ENCODE measurements at regions of chr22 and their contacts with region 1.

Region 1: DNA sequence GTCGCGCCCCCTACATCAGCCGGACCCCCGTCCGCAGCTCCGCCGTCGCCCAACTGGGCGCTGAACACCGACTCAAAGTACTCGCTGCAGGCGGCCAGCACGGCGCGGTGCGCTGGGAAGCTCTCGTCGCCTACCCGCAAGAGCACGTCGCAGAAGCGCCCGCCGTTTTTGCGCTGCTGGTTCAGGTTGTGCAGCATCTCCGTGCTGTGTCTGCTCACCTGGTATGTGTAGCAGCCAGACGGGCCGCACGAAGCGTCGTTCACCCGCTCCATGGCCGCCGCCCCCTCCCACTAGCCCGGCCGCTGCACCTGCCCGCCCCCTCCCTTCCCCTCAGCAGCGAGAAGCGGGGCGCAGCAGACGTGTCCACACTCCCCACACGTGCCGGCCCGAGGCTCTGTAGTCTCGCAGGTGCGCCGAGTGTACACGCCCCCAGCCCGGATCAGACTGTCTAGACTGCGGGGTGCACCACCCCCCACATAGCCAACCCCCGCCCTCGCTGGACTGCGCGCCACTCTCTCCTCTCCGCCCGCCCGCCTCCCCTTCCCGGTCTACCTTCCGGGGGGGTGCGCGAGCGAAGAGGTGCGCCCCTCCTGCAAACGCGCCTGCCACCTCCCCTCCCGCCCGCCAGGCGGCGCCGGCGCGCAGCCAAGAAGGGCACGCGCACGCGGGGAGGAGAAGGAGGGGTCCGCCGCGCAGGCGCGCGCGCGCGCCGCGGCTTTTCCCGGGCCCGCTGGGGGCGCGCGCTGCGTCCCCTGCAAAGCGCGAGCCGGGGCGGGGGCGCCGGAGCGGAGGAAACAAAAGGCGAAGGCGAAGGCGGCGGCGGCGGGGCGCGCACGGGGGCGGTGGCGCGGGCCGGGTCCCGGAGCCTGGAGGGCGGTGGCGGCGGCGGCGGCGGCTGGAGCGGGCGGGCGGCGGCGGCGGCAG is 553 bp downstream of the PATZ1 start:
- DNase-seq: peak; percentile 78 to 97 (median 90)
- ATAC-seq: peak; percentile 77
- H3K4me3 ChIP-seq: peak overlapping the region; percentile 63 to 72
- H3K4me3 Mint-ChIP-seq: peak overlapping the region; percentile 90
- H3K27ac ChIP-seq: peak overlapping the region; percentile 51 to 70
- H3K27ac Mint-ChIP-seq: peak overlapping the region; percentile 93
- H3K4me1 ChIP-seq: peaks cover 52% of the 10 kb centered on the region
- H3K4me1 Mint-ChIP-seq: peaks cover 52% of the 10 kb centered on the region
- H3K27me3 ChIP-seq: no peaks in the 10 kb centered on the region
- H3K27me3 Mint-ChIP-seq: no peaks in the 10 kb centered on the region
- CTCF ChIP-seq: peak; percentile 82

Region 2: DNA sequence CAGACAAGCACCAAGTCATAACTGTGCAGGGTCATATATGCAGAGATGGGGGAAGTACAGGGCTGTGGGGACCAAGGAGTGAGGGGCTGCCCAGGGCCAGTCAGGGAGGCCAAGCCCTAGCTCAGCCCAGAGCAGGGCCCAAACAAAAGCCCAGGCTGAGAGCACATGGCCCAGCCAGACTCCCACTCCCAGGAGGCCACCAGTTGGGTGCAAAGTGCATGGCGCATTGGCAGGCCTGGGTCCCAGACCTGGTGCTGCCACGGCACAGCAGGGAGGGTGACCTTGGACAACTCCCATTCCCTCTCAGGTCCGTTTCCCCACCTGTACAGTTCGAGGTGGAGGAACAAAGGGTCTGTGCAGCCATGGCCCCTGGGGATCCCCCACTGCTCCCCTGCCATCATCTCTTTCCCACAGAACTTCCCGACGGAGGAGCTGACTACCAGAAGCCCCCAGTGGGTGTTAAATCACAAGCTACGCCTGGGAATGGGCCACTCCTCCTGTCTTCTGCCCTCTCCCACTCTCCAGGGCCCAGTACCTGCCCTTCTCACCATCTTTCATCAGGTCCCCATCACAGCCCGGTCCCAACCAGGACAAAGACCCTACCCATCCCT is 1765.3 kb before region 1 on chr22:
- CTCF ChIA-PET with region 1: no interaction called
- POLR2A ChIA-PET with region 1: no interaction called
- intact Hi-C with region 1: loop called in 1 of 2 experiments (anchors 5 kb)
- DNase-seq: peak in 3 of 9 experiments; percentile 17 to 49 (median 36)
- ATAC-seq: peak; percentile 16
- H3K4me3 ChIP-seq: peak overlapping the region; percentile 69 to 80
- H3K4me3 Mint-ChIP-seq: peak overlapping the region; percentile 93
- H3K27ac ChIP-seq: peak overlapping the region; percentile 59 to 61
- H3K27ac Mint-ChIP-seq: peak overlapping the region; percentile 90
- H3K4me1 ChIP-seq: peaks cover 15% of the 10 kb centered on the region
- H3K4me1 Mint-ChIP-seq: peaks cover 21% of the 10 kb centered on the region
- H3K27me3 ChIP-seq: no peaks in the 10 kb centered on the region
- H3K27me3 Mint-ChIP-seq: no peaks in the 10 kb centered on the region
- CTCF ChIP-seq: no peak

Region 3: DNA sequence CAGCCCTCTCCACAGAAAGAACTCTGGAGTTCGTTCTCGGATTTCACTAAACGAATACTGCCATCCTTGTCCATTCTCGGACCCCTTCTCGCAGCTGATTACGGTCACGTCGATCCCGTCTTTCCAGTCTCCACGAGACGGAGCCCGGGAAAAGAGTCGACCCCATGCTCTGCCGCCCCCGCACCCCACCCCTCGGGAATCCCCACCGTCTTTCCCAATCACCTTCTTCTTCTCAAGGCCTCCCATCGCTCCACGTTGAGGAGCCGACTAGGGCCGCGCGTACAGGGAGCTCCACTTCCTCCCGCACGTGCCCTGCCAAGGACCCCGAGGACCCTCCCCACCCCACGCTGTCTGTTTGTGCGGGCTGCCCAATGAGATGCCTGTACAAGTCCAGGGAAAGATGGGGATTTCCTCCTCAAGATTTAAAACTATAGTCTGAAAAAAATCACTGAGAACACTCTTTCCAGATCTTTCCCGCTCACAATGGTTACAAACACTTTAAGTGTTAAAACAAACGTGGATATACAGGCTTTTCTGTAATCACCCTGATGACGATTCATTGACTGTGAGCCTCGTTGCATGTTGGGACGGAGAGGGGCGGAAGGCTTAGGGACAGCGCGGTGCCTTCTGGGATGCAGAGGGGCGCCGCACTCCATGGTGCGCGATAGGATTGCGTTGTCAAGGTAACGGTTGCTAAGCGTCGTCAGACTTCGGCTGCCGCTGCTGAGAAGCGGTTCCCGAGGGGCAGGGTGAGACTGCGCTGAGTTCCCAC is 753.8 kb before region 1 on chr22 and contains the start of gene PES1:
- CTCF ChIA-PET with region 1: no interaction called
- POLR2A ChIA-PET with region 1: no interaction called
- intact Hi-C with region 1: loop called (anchors 2 to 5 kb)
- DNase-seq: peak; percentile 90 to 99 (median 95)
- ATAC-seq: peak; percentile 96
- H3K4me3 ChIP-seq: peak within 1 kb of the TSS; percentile 79 to 80
- H3K4me3 Mint-ChIP-seq: no peak within 1 kb of the TSS
- H3K27ac ChIP-seq: peak within 1 kb of the TSS; percentile 89 to 97
- H3K27ac Mint-ChIP-seq: no peak within 1 kb of the TSS
- H3K4me1 ChIP-seq: peaks cover 15% of the 10 kb centered on the region
- H3K4me1 Mint-ChIP-seq: no peaks in the 10 kb centered on the region
- H3K27me3 ChIP-seq: no peaks in the 10 kb centered on the region
- H3K27me3 Mint-ChIP-seq: peaks cover 13% of the 10 kb centered on the region
- CTCF ChIP-seq: no peak
- total RNA-seq, gene PES1: 39.7 to 47.0 TPM

Region 4: DNA sequence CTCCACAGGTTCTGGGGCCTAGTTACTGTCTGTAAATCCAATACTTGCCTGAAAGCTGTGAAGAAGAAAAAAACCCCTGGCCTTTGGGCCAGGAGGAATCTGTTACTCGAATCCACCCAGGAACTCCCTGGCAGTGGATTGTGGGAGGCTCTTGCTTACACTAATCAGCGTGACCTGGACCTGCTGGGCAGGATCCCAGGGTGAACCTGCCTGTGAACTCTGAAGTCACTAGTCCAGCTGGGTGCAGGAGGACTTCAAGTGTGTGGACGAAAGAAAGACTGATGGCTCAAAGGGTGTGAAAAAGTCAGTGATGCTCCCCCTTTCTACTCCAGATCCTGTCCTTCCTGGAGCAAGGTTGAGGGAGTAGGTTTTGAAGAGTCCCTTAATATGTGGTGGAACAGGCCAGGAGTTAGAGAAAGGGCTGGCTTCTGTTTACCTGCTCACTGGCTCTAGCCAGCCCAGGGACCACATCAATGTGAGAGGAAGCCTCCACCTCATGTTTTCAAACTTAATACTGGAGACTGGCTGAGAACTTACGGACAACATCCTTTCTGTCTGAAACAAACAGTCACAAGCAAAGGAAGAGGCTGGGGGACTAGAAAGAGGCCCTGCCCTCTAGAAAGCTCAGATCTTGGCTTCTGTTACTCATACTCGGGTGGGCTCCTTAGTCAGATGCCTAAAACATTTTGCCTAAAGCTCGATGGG is 66.8 kb before region 1 on chr22:
- CTCF ChIA-PET with region 1: interaction called, 3 read pairs
- POLR2A ChIA-PET with region 1: interaction called, 16 read pairs
- intact Hi-C with region 1: no loop called
- DNase-seq: peak in 8 of 9 experiments; percentile 30 to 78 (median 64)
- ATAC-seq: peak; percentile 73
- H3K4me3 ChIP-seq: no peak overlapping the region
- H3K4me3 Mint-ChIP-seq: peak overlapping the region; percentile 73
- H3K27ac ChIP-seq: peak overlapping the region; percentile 54 to 76
- H3K27ac Mint-ChIP-seq: peak overlapping the region; percentile 94
- H3K4me1 ChIP-seq: peaks cover 93% of the 10 kb centered on the region
- H3K4me1 Mint-ChIP-seq: peaks cover 89% of the 10 kb centered on the region
- H3K27me3 ChIP-seq: no peaks in the 10 kb centered on the region
- H3K27me3 Mint-ChIP-seq: no peaks in the 10 kb centered on the region
- CTCF ChIP-seq: no peak

Region 5: DNA sequence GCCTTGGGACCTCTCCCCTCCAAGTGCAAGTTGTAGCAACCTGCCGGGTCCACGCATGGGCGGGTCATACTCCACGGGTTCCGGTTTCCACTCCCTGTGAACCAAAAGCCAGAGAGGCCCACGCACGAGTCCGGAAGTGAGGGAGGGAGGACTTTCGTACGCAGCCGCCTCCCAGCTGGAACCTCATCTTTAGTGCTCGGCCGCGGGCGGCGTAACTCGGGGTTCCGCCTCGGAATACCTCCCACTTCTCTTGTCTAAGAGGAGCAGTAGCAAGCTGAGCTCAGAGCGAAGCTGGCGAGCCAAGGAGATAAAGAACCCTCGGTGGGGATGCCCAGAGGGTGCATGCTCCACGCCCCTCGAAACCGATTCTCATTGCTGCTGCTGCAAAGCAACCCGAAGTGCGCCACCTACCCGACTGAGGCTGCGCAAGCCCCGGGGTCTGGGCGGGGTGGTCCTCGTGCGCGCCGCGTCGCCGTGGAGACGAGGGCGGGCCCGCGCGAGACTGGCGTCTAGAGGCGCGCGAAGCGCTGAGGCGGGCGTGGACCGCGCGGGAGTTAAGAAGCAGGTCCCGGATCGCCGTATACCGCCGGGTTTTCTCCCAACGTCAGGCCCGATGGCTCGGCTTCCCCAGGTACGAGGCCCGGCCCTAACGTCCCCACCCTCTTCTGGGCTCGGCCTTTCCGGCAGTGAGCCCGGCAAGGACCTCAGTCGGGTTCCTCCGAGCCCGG is 150.6 kb after region 1 on chr22 and contains the start of gene SFI1:
- CTCF ChIA-PET with region 1: no interaction called
- POLR2A ChIA-PET with region 1: interaction called, 6 read pairs
- intact Hi-C with region 1: loop called in 1 of 2 experiments (anchors 2 kb)
- DNase-seq: peak; percentile 93 to 98 (median 96)
- ATAC-seq: peak; percentile 83
- H3K4me3 ChIP-seq: peak within 1 kb of the TSS; percentile 83 to 91
- H3K4me3 Mint-ChIP-seq: peak within 1 kb of the TSS; percentile 95
- H3K27ac ChIP-seq: peak within 1 kb of the TSS; percentile 87 to 90
- H3K27ac Mint-ChIP-seq: peak within 1 kb of the TSS; percentile 99
- H3K4me1 ChIP-seq: peaks cover 27% of the 10 kb centered on the region
- H3K4me1 Mint-ChIP-seq: peaks cover 45% of the 10 kb centered on the region
- H3K27me3 ChIP-seq: no peaks in the 10 kb centered on the region
- H3K27me3 Mint-ChIP-seq: no peaks in the 10 kb centered on the region
- CTCF ChIP-seq: no peak
- total RNA-seq, gene SFI1: 217 to 235 TPM

Region 6: DNA sequence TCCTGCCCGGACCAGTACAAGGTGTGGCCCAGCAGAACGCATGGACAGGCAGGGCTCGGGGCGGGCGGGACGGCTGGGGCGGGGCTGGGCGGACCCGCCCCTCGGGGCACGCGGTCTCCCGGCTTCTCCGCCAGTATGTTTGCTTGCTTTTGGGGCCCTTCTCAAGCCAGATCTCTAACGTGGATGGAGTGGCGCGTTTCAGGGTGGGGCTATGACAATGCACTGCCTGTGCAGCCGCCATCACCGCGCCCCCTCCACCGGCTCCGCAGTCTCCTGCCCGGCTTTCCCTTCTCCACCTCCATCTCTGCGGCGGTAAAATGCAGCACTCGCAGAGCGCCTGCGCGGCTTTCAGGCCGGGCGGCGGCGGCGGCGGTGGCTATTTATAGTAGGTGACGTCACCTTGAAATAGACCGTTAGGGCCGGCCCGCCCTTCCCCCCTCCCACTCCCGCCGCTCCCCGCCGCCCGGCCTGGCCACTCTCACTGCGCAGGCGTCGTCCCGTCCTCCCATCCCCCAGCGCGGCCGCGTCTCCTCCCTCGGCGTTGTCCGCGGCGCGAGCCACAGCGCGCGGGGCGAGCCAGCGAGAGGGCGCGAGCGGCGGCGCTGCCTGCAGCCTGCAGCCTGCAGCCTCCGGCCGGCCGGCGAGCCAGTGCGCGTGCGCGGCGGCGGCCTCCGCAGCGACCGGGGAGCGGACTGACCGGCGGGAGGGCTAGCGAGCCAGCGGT is 598.5 kb after region 1 on chr22 and contains the start of gene YWHAH:
- CTCF ChIA-PET with region 1: no interaction called
- POLR2A ChIA-PET with region 1: no interaction called
- intact Hi-C with region 1: loop called (anchors 10 kb)
- DNase-seq: peak; percentile 71 to 91 (median 84)
- ATAC-seq: peak; percentile 65
- H3K4me3 ChIP-seq: peak within 1 kb of the TSS; percentile 64 to 69
- H3K4me3 Mint-ChIP-seq: peak within 1 kb of the TSS; percentile 92
- H3K27ac ChIP-seq: peak within 1 kb of the TSS; percentile 62 to 85
- H3K27ac Mint-ChIP-seq: peak within 1 kb of the TSS; percentile 90
- H3K4me1 ChIP-seq: peaks cover 17% of the 10 kb centered on the region
- H3K4me1 Mint-ChIP-seq: peaks cover 12% of the 10 kb centered on the region
- H3K27me3 ChIP-seq: no peaks in the 10 kb centered on the region
- H3K27me3 Mint-ChIP-seq: no peaks in the 10 kb centered on the region
- CTCF ChIP-seq: no peak
- total RNA-seq, gene YWHAH: 22.4 to 24.3 TPM

Measured in CD8-positive, alpha-beta T cell (primary cell).